Activated B cell treated with CpG ODN at 0.5 μM for 24 hours (primary cell): ENCODE measurements at regions of chr11 and their contacts with region 1.

Region 1: DNA sequence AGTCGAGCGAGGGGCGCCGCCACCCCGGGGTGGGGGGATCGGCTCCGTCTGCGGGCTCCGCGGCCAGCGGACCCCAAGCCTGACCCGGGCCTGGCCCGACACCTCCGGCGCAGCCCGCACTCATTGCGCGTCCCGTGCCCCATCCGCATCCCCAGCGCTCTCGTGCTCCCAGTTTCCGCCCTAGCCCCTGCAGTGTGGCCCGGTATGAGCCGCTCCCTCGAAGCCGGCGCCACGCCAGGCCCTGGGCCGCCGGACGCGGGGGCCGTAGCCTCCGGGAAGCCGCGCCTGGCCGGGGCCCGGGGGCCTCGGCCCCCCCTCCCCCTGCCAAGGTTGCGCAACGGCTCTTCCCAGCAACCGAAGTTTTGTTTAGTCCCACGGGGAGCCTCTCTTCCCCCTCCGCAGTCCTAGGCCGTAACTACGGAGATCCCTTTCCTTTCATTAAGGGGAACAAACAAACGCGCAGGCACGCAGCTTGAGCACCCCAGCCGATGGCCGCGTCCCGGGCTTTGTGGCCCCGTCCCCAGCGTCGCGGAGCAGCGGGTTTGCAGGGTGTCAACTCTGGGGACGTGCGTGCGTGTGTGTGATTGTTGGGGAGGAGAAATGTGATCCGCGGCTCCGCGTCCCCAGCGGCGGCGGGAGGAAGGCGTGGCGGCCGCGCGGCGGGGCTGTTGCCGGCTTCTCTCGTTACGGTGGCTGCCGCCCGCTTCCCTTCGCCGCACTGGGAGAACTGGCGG is 883 bp downstream of the HIPK3 start:
- DNase-seq: peak; percentile 64
- ATAC-seq: peak; percentile 37
- H3K4me3 Mint-ChIP-seq: peak overlapping the region; percentile 97
- H3K27ac Mint-ChIP-seq: peak overlapping the region; percentile 98
- H3K4me1 Mint-ChIP-seq: peaks cover 46% of the 10 kb centered on the region
- H3K27me3 Mint-ChIP-seq: no peaks in the 10 kb centered on the region
- CTCF ChIP-seq: no peak

Region 2: GRCh38 chr11:32583459-32584271 is 674.4 kb before region 1 on chr11 and contains the start of gene EIF3M:
- CTCF ChIA-PET with region 1: no interaction called
- POLR2A ChIA-PET with region 1: interaction called, 3 read pairs
- intact Hi-C with region 1: loop called (anchors 5 kb)
- DNase-seq: peak; percentile 90
- ATAC-seq: peak; percentile 100
- H3K4me3 Mint-ChIP-seq: peak within 1 kb of the TSS; percentile 95
- H3K27ac Mint-ChIP-seq: peak within 1 kb of the TSS; percentile 92
- H3K4me1 Mint-ChIP-seq: peaks cover 41% of the 10 kb centered on the region
- H3K27me3 Mint-ChIP-seq: no peaks in the 10 kb centered on the region
- CTCF ChIP-seq: no peak
- total RNA-seq, gene EIF3M: 234 and 248 TPM in 2 replicates

Region 3: DNA sequence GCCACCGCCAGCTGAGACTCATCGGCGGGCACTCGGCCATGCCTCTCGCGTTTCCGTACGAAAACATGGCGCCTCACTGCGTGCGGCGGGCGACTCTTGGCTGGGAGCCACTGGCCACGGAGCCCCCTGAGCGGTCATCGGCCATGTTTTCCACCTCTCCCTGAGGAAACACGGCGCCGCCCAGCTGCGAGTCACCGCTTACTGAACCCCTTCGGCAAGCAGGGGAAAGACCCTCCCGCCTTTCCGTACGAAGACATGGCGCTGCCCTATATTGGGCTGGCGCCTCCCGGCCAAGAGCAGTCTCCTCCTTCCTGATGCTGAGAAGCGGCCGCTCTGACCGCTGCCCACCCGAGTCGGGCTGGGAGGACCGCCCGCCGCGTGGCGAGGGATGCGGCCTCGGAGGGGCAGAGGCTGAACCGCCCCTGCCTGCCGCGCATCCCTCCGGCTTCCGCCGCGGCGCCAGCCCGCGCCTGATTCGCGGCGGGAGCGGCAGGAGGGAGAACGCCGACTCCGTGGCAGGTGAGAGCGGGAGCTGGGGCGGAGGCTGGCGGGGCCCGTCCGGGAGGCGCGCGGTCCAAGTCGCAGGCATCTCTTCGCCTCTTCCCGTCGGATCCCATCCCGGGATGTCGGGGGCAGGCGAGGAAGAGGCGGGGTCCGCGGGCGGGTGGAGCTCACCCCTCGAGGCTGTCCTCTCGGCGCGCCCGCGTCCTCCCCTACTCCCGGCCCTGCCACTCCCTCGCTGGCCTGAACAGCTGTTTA is 218.6 kb before region 1 on chr11 and contains the start of gene TCP11L1:
- CTCF ChIA-PET with region 1: no interaction called
- POLR2A ChIA-PET with region 1: interaction called, 3 read pairs
- intact Hi-C with region 1: loop called (anchors 1 kb)
- DNase-seq: peak; percentile 77
- ATAC-seq: peak; percentile 85
- H3K4me3 Mint-ChIP-seq: peak within 1 kb of the TSS; percentile 95
- H3K27ac Mint-ChIP-seq: peak within 1 kb of the TSS; percentile 95
- H3K4me1 Mint-ChIP-seq: peaks cover 13% of the 10 kb centered on the region
- H3K27me3 Mint-ChIP-seq: peaks cover 8% of the 10 kb centered on the region
- CTCF ChIP-seq: no peak
- total RNA-seq, gene TCP11L1: 13.5 and 17.7 TPM in 2 replicates

Region 4: DNA sequence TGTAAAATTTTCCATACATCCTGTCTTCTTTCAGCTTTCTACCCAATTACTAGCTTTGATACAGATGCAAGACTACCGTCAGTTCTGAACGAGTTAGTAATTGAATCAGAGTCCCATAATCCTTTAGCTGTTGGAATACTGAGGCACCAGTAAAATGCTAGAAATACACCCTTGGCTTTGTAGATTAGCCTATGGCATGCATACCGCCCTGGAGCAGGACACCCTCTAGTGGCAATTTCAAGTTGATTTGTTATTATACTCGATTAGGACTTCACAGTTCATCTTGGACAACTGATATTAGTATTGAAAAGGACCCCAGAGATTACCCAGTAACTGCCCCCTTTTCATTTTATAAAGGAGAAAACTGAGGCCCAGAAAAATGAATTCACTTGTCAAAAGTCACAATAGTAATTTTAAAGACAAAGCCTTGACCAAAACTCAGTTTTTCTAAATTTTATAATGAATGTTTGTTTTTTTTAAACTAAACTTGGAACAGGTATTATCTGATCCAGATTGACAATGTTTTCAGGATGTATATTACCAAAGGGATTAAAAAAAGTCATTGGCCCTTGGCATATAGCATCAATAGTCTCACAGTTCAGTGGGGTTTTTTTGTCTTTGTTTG is 71.8 kb after region 1 on chr11:
- CTCF ChIA-PET with region 1: no interaction called
- POLR2A ChIA-PET with region 1: no interaction called
- intact Hi-C with region 1: loop called (anchors 1 kb)
- DNase-seq: no peak
- ATAC-seq: peak; percentile 65
- H3K4me3 Mint-ChIP-seq: no peak overlapping the region
- H3K27ac Mint-ChIP-seq: no peak overlapping the region
- H3K4me1 Mint-ChIP-seq: peaks cover 14% of the 10 kb centered on the region
- H3K27me3 Mint-ChIP-seq: no peaks in the 10 kb centered on the region
- CTCF ChIP-seq: no peak

Region 5: DNA sequence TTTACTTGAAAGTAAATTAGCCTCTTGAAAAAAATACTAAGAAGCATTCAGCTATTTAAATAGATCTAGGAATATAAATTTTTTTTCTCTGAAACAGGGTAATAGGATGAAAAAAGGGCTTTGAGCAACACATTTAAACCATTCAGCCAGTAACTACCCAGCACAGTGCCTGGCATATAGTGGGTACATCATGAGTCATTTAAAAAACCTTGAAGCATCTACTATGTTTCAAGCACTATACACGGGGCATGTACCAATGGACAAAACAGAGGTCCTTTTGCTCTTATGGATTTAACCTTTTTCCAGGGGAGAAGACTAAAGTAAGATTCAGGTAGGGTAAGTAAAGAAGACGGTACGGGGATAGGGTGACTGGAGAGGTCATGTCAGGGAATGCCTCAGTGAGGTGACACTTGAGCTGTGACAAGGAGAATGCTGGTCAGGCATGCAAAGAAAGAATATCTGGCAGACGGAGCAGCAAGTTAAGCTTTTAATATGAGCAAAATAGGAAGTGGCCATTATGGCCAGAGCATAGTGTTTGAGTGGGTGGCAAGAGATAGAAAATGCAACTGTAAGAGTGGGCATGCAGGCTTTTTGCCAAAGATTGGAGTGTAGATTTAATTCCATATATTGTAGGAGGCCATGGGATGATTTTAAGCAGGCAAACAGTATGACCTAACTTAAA is 100.2 kb after region 1 on chr11:
- CTCF ChIA-PET with region 1: no interaction called
- POLR2A ChIA-PET with region 1: no interaction called
- intact Hi-C with region 1: no loop called
- DNase-seq: no peak
- ATAC-seq: no peak
- H3K4me3 Mint-ChIP-seq: no peak overlapping the region
- H3K27ac Mint-ChIP-seq: no peak overlapping the region
- H3K4me1 Mint-ChIP-seq: no peaks in the 10 kb centered on the region
- H3K27me3 Mint-ChIP-seq: no peaks in the 10 kb centered on the region
- CTCF ChIP-seq: no peak

Region 6: DNA sequence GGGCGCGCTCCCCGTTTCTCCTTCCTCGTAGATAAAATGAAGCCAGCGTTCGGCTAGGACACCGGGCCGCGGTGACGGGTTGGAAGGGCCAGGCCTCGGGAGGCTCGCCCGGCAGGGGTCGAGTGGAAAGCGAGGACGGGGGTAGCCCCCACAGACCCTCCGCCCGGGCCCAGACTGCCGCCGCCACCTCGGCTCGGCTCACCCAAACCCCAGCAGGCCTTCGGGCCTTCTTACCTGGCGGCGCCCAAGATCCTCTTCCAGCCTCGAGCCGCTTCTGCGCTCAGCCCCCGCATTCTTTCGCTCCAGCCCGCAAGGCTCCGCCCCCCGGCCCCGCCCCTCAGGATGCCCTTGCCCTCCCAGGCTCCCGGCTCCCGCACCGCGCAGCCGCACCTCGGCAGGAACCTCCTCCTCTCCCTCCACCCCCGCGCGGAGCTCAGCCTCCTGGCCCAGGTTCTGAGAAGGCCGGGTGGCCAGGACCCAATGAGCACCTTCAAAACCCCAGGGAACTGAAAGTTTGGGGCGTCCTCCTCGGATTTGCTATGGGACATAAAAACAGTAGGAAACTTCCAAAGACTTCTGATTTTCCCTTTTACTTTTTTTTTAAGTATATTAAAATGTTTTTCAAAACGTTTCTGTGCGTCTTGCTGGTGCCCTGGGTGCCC is 478.2 kb after region 1 on chr11 and contains the start of gene CD59:
- CTCF ChIA-PET with region 1: no interaction called
- POLR2A ChIA-PET with region 1: no interaction called
- intact Hi-C with region 1: loop called (anchors 5 kb)
- DNase-seq: peak; percentile 82
- ATAC-seq: peak; percentile 81
- H3K4me3 Mint-ChIP-seq: peak within 1 kb of the TSS; percentile 88
- H3K27ac Mint-ChIP-seq: peak within 1 kb of the TSS; percentile 81
- H3K4me1 Mint-ChIP-seq: peaks cover 39% of the 10 kb centered on the region
- H3K27me3 Mint-ChIP-seq: no peaks in the 10 kb centered on the region
- CTCF ChIP-seq: no peak
- total RNA-seq, gene CD59: 92.9 and 94.1 TPM in 2 replicates

Region 7: GRCh38 chr11:34250732-34251639 is 992.9 kb after region 1 on chr11:
- CTCF ChIA-PET with region 1: no interaction called
- POLR2A ChIA-PET with region 1: no interaction called
- intact Hi-C with region 1: loop called (anchors 2 kb)
- DNase-seq: peak; percentile 63
- ATAC-seq: peak; percentile 98
- H3K4me3 Mint-ChIP-seq: peak overlapping the region; percentile 55
- H3K27ac Mint-ChIP-seq: peak overlapping the region; percentile 71
- H3K4me1 Mint-ChIP-seq: peaks cover 55% of the 10 kb centered on the region
- H3K27me3 Mint-ChIP-seq: no peaks in the 10 kb centered on the region
- CTCF ChIP-seq: no peak